ENCODE measurements at regions of chr11 and their contacts with region 1.

Region 1: GRCh38 chr11:11265994-11266606 is 87.0 kb downstream of the CSNK2A3 start:
- DNase-seq: peak in 1 of 2 experiments; percentile 94
- H3K4me3 ChIP-seq: no peak overlapping the region
- H3K27ac ChIP-seq: no peak overlapping the region
- H3K4me1 ChIP-seq: peaks cover 0 to 7% (median under 1%) of the 10 kb centered on the region in 4 experiments; a peak in 3 of 7 replicates
- H3K27me3 ChIP-seq: no peaks in the 10 kb centered on the region
- CTCF ChIP-seq: peak; percentile 90 to 98 (median 95)
- EP300 ChIP-seq: no peak
- POLR2A ChIP-seq: no peak
- RAD21 ChIP-seq: peak; percentile 86 to 92

Region 2: GRCh38 chr11:11252403-11252802 is 13.7 kb before region 1 on chr11:
- CTCF ChIA-PET with region 1: interaction called, 17 read pairs
- POLR2A ChIA-PET with region 1: interaction called, 3 read pairs
- DNase-seq: no peak
- H3K4me3 ChIP-seq: no peak overlapping the region
- H3K27ac ChIP-seq: no peak overlapping the region
- H3K4me1 ChIP-seq: 0 out of 7 replicates have a peak, but pooled peaks cover 0 to 2% (median 0%) of the 10 kb centered on the region in 4 experiments
- H3K27me3 ChIP-seq: no peaks in the 10 kb centered on the region
- CTCF ChIP-seq: no peak
- EP300 ChIP-seq: no peak
- POLR2A ChIP-seq: no peak
- RAD21 ChIP-seq: no peak

Measured in H1 (cell line).